Motor neuron (in vitro differentiated cells): ENCODE measurements at regions of chr3 and their contacts with region 1.

Region 1: DNA sequence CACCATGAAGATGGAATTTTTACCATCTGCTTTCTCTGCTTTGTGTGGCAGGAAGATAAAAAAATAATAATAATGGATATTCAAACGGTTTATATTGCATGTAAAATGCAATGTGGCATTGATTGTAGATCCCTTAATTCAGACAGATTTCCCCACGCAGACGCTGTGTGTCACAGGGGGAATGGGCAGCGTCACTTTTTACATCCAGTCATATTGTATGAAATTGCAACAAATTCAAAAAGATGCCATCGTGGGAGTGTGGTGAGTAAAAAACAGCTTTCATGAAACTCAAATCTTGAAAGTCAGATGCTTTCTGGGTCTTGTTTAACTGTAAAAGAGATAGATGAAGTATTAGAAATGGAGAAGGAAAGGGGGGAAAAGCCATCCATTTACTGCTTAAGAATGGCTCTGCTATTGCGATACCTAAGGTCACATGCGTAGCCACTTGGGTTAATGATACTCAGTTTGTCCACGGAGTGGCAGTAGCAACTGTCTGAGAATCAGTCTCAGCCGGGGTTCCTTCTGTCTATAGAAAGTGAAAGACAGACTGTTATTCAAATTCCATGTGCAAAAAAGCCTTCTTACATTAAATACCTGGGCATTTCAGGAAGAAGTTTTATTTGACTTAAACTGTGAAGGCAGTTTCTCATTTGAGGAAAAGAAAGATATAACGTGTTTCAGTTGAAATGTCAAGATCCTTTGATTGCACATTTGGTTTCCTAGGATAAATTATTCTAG is 28.5 kb downstream of the BTD start:
- ATAC-seq: peak; percentile 65 to 97 (median 88)
- H3K4me3 ChIP-seq: no peak overlapping the region
- H3K27ac ChIP-seq: no peak overlapping the region
- H3K4me1 ChIP-seq: peaks cover 4 to 33% of the 10 kb centered on the region in 2 donors

Region 2: GRCh38 chr3:15205934-15206661 is 423.9 kb before region 1 on chr3 and contains the start of gene CAPN7:
- in situ Hi-C with region 1: no loop called
- ATAC-seq: peak; percentile 88 to 94 (median 92)
- H3K4me3 ChIP-seq: peak within 1 kb of the TSS; percentile 75 to 91 (median 80)
- H3K27ac ChIP-seq: peak within 1 kb of the TSS; percentile 88 to 94
- H3K4me1 ChIP-seq: peaks cover 5 to 7% of the 10 kb centered on the region in 2 donors
- total RNA-seq, gene CAPN7: 23.4 to 44.3 (median 32.6) TPM

Region 3: GRCh38 chr3:15405448-15406050 is 224.5 kb before region 1 on chr3:
- in situ Hi-C with region 1: no loop called
- ATAC-seq: peak in 3 of 8 experiments; percentile 65 to 79 (median 68)
- H3K4me3 ChIP-seq: no peak overlapping the region
- H3K27ac ChIP-seq: no peak overlapping the region
- H3K4me1 ChIP-seq: no peaks in the 10 kb centered on the region

Region 4: DNA sequence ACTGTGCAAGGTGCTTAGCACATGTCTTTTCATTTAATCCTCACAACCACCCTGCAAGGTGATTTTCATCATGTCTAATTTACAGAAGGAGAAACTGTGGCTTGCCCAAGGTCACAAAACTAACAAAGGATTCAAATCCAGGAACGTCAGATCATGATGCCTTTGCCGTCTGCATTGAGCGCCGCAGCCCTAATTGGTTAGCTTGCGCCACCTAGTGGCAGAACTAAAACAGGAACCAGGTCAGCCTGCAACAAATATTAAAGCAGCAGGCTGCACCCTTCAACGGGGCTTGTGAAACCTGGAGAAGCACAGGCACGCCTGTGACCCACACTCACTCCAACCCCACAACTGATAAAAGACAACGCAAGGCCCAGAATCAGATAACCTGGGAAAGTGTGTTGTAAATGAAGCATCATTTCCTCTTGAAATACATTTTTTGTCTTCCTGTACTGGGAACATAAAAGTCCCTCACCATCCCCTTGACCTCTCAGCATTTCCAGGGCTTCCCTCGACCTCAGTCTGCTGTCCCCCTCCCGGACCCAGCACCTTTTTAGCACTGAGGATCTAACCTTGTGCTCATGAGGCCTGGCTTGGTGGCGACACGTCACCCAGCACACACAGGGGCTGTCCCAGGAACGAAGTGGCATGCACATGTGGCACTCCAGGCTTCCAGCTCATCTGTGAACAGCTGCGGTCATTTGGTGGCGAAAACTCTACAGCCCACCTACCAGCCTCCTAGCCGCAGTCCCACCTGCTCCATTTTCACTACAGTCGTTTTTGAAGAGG is 617.4 kb after region 1 on chr3:
- in situ Hi-C with region 1: loop called in 2 of 9 experiments (anchors 25 kb)
- ATAC-seq: peak; percentile 66 to 94 (median 88)
- H3K4me3 ChIP-seq: no peak overlapping the region
- H3K27ac ChIP-seq: no peak overlapping the region
- H3K4me1 ChIP-seq: peaks cover 0 to 3% of the 10 kb centered on the region in 2 donors